ENCODE measurements at regions of chr3 and their contacts with region 1.

Region 1: GRCh38 chr3:165754219-165755007 is 82.8 kb downstream of the BCHE start:
- DNase-seq: no peak
- H3K4me3 ChIP-seq: no peak overlapping the region
- H3K27ac ChIP-seq: no peak overlapping the region
- H3K4me1 ChIP-seq: no peaks in the 10 kb centered on the region
- H3K27me3 ChIP-seq: peaks cover 2% of the 10 kb centered on the region
- CTCF ChIP-seq: no peak

Region 2: DNA sequence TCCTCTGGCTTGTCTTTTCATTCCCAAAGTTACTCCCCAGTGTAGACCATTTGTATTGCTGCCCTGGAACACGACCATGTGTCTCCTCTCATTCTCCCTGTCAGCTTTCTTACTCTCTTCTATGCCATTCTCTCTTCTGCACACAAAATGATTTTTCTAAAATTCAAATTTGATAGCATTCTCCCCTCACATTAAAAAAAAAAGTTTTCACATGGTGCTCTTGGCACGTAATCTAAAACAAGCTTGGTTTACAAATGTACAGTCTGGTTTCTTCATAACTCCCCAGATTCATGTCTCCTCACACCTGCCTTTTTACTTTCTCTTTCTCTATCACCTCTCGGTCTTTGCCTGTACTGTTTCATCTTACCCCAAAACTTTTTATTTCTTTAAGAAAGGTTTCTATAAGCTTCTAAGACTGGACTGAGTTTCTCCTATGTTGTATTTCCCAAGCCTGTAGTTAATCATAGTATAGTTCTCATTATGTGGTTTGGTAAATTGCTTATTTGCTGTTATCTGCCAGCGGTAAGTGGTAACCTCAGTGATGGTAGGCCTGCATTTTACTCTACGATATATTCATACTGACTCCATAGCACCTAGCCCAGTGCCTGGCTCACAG is 51.6 kb after region 1 on chr3:
- CTCF ChIA-PET with region 1: no interaction called
- dilution Hi-C with region 1: loop called (anchors 5 kb)
- in situ Hi-C with region 1: no loop called
- intact Hi-C with region 1: no loop called
- DNase-seq: no peak
- H3K4me3 ChIP-seq: peak overlapping the region in 1 of 3 experiments; percentile 13
- H3K27ac ChIP-seq: no peak overlapping the region
- H3K4me1 ChIP-seq: no peaks in the 10 kb centered on the region
- H3K27me3 ChIP-seq: no peaks in the 10 kb centered on the region
- CTCF ChIP-seq: no peak

Region 3: DNA sequence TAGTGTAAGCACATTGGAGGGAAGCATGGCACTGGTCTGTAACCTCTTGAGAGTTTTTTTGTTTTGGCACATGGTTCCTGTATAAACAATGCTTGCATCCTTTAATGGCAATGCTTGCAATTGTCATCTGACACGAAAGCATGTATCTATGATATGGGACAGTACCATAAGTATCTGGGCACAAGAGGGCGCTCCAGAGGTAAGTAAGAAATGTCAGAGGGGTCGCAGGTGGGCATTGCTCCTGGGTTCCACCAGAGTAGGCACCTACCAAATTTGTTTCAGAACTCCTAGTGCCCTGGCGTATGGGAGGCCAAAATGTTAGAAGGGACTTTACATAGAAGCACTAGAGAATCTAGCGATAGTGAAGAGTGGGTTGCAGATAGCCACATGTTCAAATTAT is 141.5 kb after region 1 on chr3:
- CTCF ChIA-PET with region 1: no interaction called
- dilution Hi-C with region 1: no loop called
- in situ Hi-C with region 1: no loop called
- intact Hi-C with region 1: no loop called
- DNase-seq: no peak
- H3K4me3 ChIP-seq: no peak overlapping the region
- H3K27ac ChIP-seq: no peak overlapping the region
- H3K4me1 ChIP-seq: no peaks in the 10 kb centered on the region
- H3K27me3 ChIP-seq: no peaks in the 10 kb centered on the region
- CTCF ChIP-seq: peak; percentile 22 to 42